ENCODE measurements at regions of chr13 and their contacts with region 1.

Region 1: GRCh38 chr13:44577236-44578066 is 1.3 kb upstream of the TSC22D1 start:
- DNase-seq: peak; percentile 93 to 98 (median 96)
- ATAC-seq: peak; percentile 73
- H3K4me3 ChIP-seq: peak overlapping the region; percentile 77
- H3K4me3 Mint-ChIP-seq: peak overlapping the region; percentile 99
- H3K27ac ChIP-seq: peak overlapping the region; percentile 86 to 89
- H3K27ac Mint-ChIP-seq: peak overlapping the region; percentile 96
- H3K4me1 ChIP-seq: peaks cover 37% of the 10 kb centered on the region
- H3K4me1 Mint-ChIP-seq: peaks cover 41% of the 10 kb centered on the region
- H3K27me3 ChIP-seq: no peaks in the 10 kb centered on the region
- H3K27me3 Mint-ChIP-seq: no peaks in the 10 kb centered on the region
- CTCF ChIP-seq: no peak

Region 2: DNA sequence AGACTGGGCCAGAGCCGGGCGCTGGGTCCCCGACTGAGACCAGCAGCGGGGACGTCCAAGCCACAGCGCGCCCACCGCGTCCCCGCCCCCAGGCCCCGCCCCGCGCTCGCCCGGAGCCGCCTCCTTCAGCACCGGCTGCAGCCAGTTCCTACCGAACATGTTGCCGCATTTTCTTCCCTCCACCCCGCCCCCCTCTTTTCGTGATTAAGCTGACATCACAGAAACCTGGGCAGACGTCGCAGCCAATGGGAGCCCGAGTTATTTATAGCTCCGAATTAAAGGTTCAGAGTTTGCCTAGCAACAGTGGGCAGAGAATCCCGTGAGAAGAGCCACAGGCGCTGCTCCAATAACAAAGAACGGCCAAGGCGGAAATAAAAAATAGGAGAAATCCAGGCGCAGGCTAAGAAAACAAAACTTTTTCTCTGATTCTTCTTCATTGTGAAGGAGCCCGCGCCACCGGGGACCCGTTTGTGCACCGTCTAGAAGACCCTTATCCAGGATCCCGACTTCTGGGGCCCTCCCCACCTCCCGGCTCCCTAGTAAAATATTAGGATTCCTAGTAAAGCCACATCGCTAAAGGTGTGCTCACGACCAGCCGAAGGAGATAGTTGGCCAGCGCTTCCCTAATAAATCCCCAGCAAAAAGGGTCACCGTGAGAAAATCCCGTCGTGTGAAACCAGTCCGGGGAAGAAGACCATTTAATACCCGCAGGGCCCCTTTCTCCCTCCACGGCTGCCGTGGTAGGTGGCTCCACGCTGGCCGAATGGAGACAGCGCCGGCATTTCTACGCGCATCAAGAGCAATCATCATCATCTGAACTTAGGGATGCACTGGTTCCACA is 142.1 kb before region 1 on chr13:
- CTCF ChIA-PET with region 1: no interaction called
- POLR2A ChIA-PET with region 1: no interaction called
- intact Hi-C with region 1: loop called in 1 of 2 experiments (anchors 5 kb)
- DNase-seq: peak; percentile 76 to 95 (median 80)
- ATAC-seq: peak; percentile 83
- H3K4me3 ChIP-seq: peak overlapping the region; percentile 64
- H3K4me3 Mint-ChIP-seq: peak overlapping the region; percentile 91
- H3K27ac ChIP-seq: peak overlapping the region; percentile 3 to 43
- H3K27ac Mint-ChIP-seq: peak overlapping the region; percentile 57
- H3K4me1 ChIP-seq: peaks cover 29% of the 10 kb centered on the region
- H3K4me1 Mint-ChIP-seq: peaks cover 35% of the 10 kb centered on the region
- H3K27me3 ChIP-seq: peaks cover 14 to 18% of the 10 kb centered on the region in 2 experiments
- H3K27me3 Mint-ChIP-seq: peaks cover 12% of the 10 kb centered on the region
- CTCF ChIP-seq: no peak

Region 3: GRCh38 chr13:44565881-44566280 is 11.6 kb before region 1 on chr13:
- CTCF ChIA-PET with region 1: interaction called, 12 read pairs
- POLR2A ChIA-PET with region 1: interaction called, 4 read pairs
- intact Hi-C with region 1: no loop called
- DNase-seq: no peak
- ATAC-seq: no peak
- H3K4me3 ChIP-seq: no peak overlapping the region
- H3K4me3 Mint-ChIP-seq: no peak overlapping the region
- H3K27ac ChIP-seq: no peak overlapping the region
- H3K27ac Mint-ChIP-seq: no peak overlapping the region
- H3K4me1 ChIP-seq: no peaks in the 10 kb centered on the region
- H3K4me1 Mint-ChIP-seq: peaks cover 39% of the 10 kb centered on the region
- H3K27me3 ChIP-seq: no peaks in the 10 kb centered on the region
- H3K27me3 Mint-ChIP-seq: no peaks in the 10 kb centered on the region
- CTCF ChIP-seq: no peak

Region 4: GRCh38 chr13:45119991-45120864 is 542.8 kb after region 1 on chr13 and contains the start of gene GTF2F2:
- CTCF ChIA-PET with region 1: no interaction called
- POLR2A ChIA-PET with region 1: no interaction called
- intact Hi-C with region 1: loop called in 1 of 2 experiments (anchors 5 kb)
- DNase-seq: peak; percentile 77 to 94 (median 82)
- ATAC-seq: peak; percentile 59
- H3K4me3 ChIP-seq: peak within 1 kb of the TSS; percentile 75
- H3K4me3 Mint-ChIP-seq: no peak within 1 kb of the TSS
- H3K27ac ChIP-seq: peak within 1 kb of the TSS; percentile 83 to 92
- H3K27ac Mint-ChIP-seq: no peak within 1 kb of the TSS
- H3K4me1 ChIP-seq: peaks cover 23% of the 10 kb centered on the region
- H3K4me1 Mint-ChIP-seq: peaks cover 12% of the 10 kb centered on the region
- H3K27me3 ChIP-seq: no peaks in the 10 kb centered on the region
- H3K27me3 Mint-ChIP-seq: no peaks in the 10 kb centered on the region
- CTCF ChIP-seq: no peak
- total RNA-seq, gene GTF2F2: 11.7 to 14.8 TPM

Region 5: DNA sequence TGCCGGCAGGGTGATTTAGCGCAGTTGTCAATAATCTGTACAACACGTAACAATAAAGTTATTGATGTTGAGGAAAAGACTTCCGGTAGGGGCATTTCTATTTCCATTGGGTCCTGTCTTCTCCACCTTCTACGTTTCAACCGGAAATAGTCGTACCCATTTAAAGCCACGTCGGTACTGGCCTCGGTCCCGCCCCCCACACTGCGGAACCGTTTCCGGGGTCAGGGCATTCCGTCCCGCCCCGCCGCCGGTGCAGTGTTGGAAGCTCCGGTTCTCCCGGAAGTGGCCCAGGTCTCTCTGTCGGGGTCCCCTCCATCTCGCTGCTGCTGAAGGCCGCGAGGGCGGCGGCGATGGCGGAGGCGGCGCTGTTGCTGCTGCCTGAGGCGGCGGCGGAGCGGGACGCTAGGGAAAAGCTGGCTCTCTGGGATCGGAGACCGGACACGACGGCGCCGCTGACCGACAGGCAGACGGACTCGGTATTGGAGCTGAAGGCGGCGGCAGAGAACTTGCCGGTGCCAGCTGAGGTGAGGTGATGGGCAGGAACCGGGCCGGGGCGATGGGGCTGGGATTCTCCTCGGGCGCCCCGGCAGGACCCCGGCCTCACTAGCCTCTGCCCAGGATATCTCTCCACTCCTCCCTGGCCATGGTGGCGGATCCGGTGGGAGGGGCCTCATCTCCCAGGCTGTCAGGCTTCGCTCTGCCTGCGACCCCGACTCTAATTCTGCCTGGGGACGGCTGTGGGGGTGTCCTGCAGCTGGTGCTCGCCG is 887.4 kb after region 1 on chr13 and contains the start of gene COG3:
- CTCF ChIA-PET with region 1: no interaction called
- POLR2A ChIA-PET with region 1: no interaction called
- intact Hi-C with region 1: loop called in 1 of 2 experiments (anchors 10 kb)
- DNase-seq: peak; percentile 88 to 98 (median 93)
- ATAC-seq: peak; percentile 93
- H3K4me3 ChIP-seq: peak within 1 kb of the TSS; percentile 94
- H3K4me3 Mint-ChIP-seq: peak within 1 kb of the TSS; percentile 84
- H3K27ac ChIP-seq: peak within 1 kb of the TSS; percentile 78 to 97
- H3K27ac Mint-ChIP-seq: peak within 1 kb of the TSS; percentile 85
- H3K4me1 ChIP-seq: peaks cover 30% of the 10 kb centered on the region
- H3K4me1 Mint-ChIP-seq: peaks cover 60% of the 10 kb centered on the region
- H3K27me3 ChIP-seq: no peaks in the 10 kb centered on the region
- H3K27me3 Mint-ChIP-seq: no peaks in the 10 kb centered on the region
- CTCF ChIP-seq: peak; percentile 50
- total RNA-seq, gene COG3: 52.8 to 57.0 TPM

Measured in CD4-positive, alpha-beta T cell (primary cell).